GM12878 (cell line): ENCODE measurements at regions of chr20 and their contacts with region 1.

Region 1: DNA sequence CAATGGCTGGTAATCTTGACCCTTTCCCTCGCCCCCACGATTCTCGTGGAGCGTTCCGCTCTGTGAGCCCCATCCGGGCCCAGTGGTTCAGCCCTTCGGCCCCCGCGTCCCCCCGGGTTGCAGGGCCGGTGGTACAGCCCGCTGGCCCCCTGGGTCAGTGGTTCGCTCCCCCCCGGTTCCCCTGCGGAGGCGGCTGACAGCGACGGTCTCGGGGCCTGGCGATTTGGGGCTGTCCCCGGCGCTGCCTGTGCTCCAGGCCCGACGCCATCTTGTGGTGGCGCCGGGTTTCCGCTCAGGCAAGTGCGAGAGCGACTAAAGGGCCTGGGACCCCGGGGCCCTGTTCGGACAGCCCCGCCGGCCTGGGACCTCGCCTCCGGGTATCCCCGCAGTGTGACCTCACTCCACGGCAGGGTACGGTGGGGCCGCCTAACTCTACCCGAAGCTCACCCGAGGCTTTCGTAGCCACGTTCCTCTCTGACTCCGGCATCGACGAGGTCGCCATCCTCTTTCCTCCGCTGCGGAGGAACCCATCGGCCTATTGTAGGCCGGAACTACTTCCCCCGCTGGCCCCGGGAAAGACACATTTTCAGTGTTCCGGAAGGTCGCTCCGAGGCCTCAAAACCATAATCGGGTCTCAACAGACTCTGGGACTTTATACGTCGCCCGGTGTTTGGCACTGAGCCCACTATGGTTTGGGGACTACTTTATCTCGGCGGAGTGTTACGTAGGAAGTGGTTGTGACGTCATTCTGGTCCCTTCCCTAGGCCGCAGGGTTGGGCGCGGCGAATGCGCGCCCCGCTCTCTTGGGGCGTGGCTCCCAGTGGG is at the start of gene ZNF335:
- DNase-seq: peak; percentile 86
- ATAC-seq: peak; percentile 78
- H3K4me3 ChIP-seq: peak within 1 kb of the TSS; percentile 81
- H3K27ac ChIP-seq: peak within 1 kb of the TSS; percentile 97
- H3K4me1 ChIP-seq: peaks cover 5% of the 10 kb centered on the region
- H3K27me3 ChIP-seq: no peaks in the 10 kb centered on the region
- CTCF ChIP-seq: peak in 1 of 3 experiments; percentile 27; a peak in 1 of 6 replicates
- EP300 ChIP-seq: peak; percentile 13 to 58; a peak in 3 of 4 replicates
- POLR2A ChIP-seq: peak; percentile 88
- RAD21 ChIP-seq: no peak
- polyA plus RNA-seq, gene ZNF335: 0.74 to 1.2 TPM

Region 2: DNA sequence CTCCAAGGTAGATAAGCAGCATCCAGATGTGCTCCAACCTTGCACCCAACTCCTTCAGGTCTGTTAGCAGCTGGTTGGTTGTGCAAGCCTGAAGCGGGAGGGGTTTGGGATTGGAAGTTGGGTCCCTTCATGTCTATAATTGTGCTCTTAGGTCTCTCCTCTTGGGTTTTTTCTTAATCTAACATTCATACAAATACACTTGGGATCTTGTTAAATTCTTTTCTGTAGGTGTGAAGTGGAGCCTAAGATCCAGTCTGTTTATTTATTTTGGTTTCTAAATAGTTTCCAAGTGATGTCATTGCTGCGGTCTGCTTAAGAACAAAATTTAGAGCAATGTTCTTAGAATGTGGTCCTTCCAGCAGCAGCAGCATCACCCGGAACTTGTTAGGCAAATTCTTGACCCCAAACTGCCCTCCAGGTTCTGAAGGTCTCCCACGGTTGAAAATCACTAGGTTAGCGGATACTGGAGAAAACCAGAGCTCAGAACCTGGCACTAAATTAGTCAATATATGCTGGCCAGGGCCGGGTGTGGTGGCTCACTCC is 154.2 kb before region 1 on chr20:
- CTCF ChIA-PET with region 1: interaction called, 18 read pairs
- POLR2A ChIA-PET with region 1: interaction called, 5 read pairs
- RAD21 ChIA-PET with region 1: interaction called, 6 read pairs
- SMC1A ChIA-PET with region 1: interaction called, 6 read pairs
- in situ Hi-C with region 1: no loop called
- intact Hi-C with region 1: no loop called
- DNase-seq: no peak
- ATAC-seq: no peak; the same call in 1 of the 3 replicates
- H3K4me3 ChIP-seq: no peak overlapping the region
- H3K27ac ChIP-seq: no peak overlapping the region
- H3K4me1 ChIP-seq: no peaks in the 10 kb centered on the region
- H3K27me3 ChIP-seq: no peaks in the 10 kb centered on the region; a peak in 1 of 4 replicates
- CTCF ChIP-seq: no peak
- EP300 ChIP-seq: no peak
- POLR2A ChIP-seq: no peak
- RAD21 ChIP-seq: no peak

Region 3: GRCh38 chr20:45890985-45891983 is 80.6 kb before region 1 on chr20 and contains the starts of genes CTSA and NEURL2:
- CTCF ChIA-PET with region 1: interaction called, 17 read pairs
- POLR2A ChIA-PET with region 1: interaction called, 9 read pairs
- RAD21 ChIA-PET with region 1: interaction called, 8 read pairs
- SMC1A ChIA-PET with region 1: interaction called, 9 read pairs
- in situ Hi-C with region 1: no loop called
- intact Hi-C with region 1: loop called (anchors 5 kb)
- DNase-seq: peak; percentile 51
- ATAC-seq: peak; percentile 87
- H3K4me3 ChIP-seq: peak within 1 kb of the TSS; percentile 83
- H3K27ac ChIP-seq: peak within 1 kb of the TSS; percentile 75
- H3K4me1 ChIP-seq: peaks cover 22% of the 10 kb centered on the region
- H3K27me3 ChIP-seq: no peaks in the 10 kb centered on the region
- CTCF ChIP-seq: peak in 1 of 3 experiments; percentile 26; a peak in 1 of 6 replicates
- EP300 ChIP-seq: peak; percentile 43 to 62; a peak in 2 of 4 replicates
- POLR2A ChIP-seq: peak; percentile 88
- RAD21 ChIP-seq: 0 out of 2 replicates have a peak, but pooled peaks have one; percentile 9
- polyA plus RNA-seq, gene CTSA: 7.1 to 8.6 TPM
- polyA plus RNA-seq, gene NEURL2: 0.97 to 1.8 TPM

Region 4: GRCh38 chr20:45934586-45935415 is 37.1 kb before region 1 on chr20 and contains the start of gene PCIF1:
- CTCF ChIA-PET with region 1: interaction called, 79 read pairs
- POLR2A ChIA-PET with region 1: interaction called, 50 read pairs
- RAD21 ChIA-PET with region 1: interaction called, 23 read pairs
- SMC1A ChIA-PET with region 1: interaction called, 21 read pairs
- in situ Hi-C with region 1: no loop called
- intact Hi-C with region 1: loop called (anchors 2 kb)
- DNase-seq: peak; percentile 93
- ATAC-seq: peak; percentile 87
- H3K4me3 ChIP-seq: peak within 1 kb of the TSS; percentile 81
- H3K27ac ChIP-seq: peak within 1 kb of the TSS; percentile 97
- H3K4me1 ChIP-seq: peaks cover 5% of the 10 kb centered on the region; the same call in 1 of the 2 replicates
- H3K27me3 ChIP-seq: no peaks in the 10 kb centered on the region
- CTCF ChIP-seq: no peak
- EP300 ChIP-seq: no peak
- POLR2A ChIP-seq: peak; percentile 98
- RAD21 ChIP-seq: no peak
- polyA plus RNA-seq, gene PCIF1: 8.4 to 10.1 TPM

Region 5: GRCh38 chr20:45998761-45999160 is 26.9 kb after region 1 on chr20:
- CTCF ChIA-PET with region 1: interaction called, 14 read pairs
- POLR2A ChIA-PET with region 1: interaction called, 4 read pairs
- RAD21 ChIA-PET with region 1: interaction called, 4 read pairs
- SMC1A ChIA-PET with region 1: interaction called, 4 read pairs
- in situ Hi-C with region 1: no loop called
- intact Hi-C with region 1: no loop called
- DNase-seq: no peak
- ATAC-seq: peak; percentile 82
- H3K4me3 ChIP-seq: no peak overlapping the region
- H3K27ac ChIP-seq: no peak overlapping the region
- H3K4me1 ChIP-seq: peaks cover 10% of the 10 kb centered on the region
- H3K27me3 ChIP-seq: no peaks in the 10 kb centered on the region; a peak in 1 of 4 replicates
- CTCF ChIP-seq: no peak
- EP300 ChIP-seq: no peak
- POLR2A ChIP-seq: no peak
- RAD21 ChIP-seq: no peak

Region 6: GRCh38 chr20:46998477-46999240 is 1026.8 kb after region 1 on chr20:
- CTCF ChIA-PET with region 1: no interaction called
- POLR2A ChIA-PET with region 1: no interaction called
- RAD21 ChIA-PET with region 1: no interaction called
- SMC1A ChIA-PET with region 1: no interaction called
- in situ Hi-C with region 1: no loop called
- intact Hi-C with region 1: no loop called
- DNase-seq: no peak
- ATAC-seq: no peak
- H3K4me3 ChIP-seq: no peak overlapping the region
- H3K27ac ChIP-seq: no peak overlapping the region
- H3K4me1 ChIP-seq: peaks cover 3% of the 10 kb centered on the region; the same call in 1 of the 2 replicates
- H3K27me3 ChIP-seq: 0 out of 4 replicates have a peak, but pooled peaks cover 0 to 1% of the 10 kb centered on the region in 2 experiments
- CTCF ChIP-seq: no peak
- EP300 ChIP-seq: no peak
- POLR2A ChIP-seq: no peak
- RAD21 ChIP-seq: no peak